GM12878 (cell line): ENCODE measurements at regions of chr4 and their contacts with region 1.

Region 1: GRCh38 chr4:87375719-87376291 is 15.2 kb downstream of the HSD17B11 start:
- DNase-seq: no peak
- ATAC-seq: peak; percentile 81
- H3K4me3 ChIP-seq: no peak overlapping the region
- H3K27ac ChIP-seq: no peak overlapping the region
- H3K4me1 ChIP-seq: no peaks in the 10 kb centered on the region
- H3K27me3 ChIP-seq: no peaks in the 10 kb centered on the region
- CTCF ChIP-seq: peak; percentile 64 to 76 (median 65)
- EP300 ChIP-seq: no peak
- POLR2A ChIP-seq: no peak
- RAD21 ChIP-seq: peak; percentile 86

Region 2: GRCh38 chr4:86934771-86935565 is 440.8 kb before region 1 on chr4 and contains the start of gene AFF1:
- CTCF ChIA-PET with region 1: no interaction called
- POLR2A ChIA-PET with region 1: no interaction called
- RAD21 ChIA-PET with region 1: no interaction called
- SMC1A ChIA-PET with region 1: no interaction called
- in situ Hi-C with region 1: no loop called
- intact Hi-C with region 1: no loop called
- DNase-seq: peak; percentile 71
- ATAC-seq: peak; percentile 72
- H3K4me3 ChIP-seq: peak within 1 kb of the TSS; percentile 91
- H3K27ac ChIP-seq: peak within 1 kb of the TSS; percentile 93
- H3K4me1 ChIP-seq: peaks cover 3% of the 10 kb centered on the region; the same call in 1 of the 2 replicates
- H3K27me3 ChIP-seq: no peaks in the 10 kb centered on the region
- CTCF ChIP-seq: peak in 2 of 3 experiments; percentile 30 to 32; a peak in 4 of 6 replicates
- EP300 ChIP-seq: no peak
- POLR2A ChIP-seq: peak; percentile 96
- RAD21 ChIP-seq: peak; percentile 17; the same call in 1 of the 2 replicates
- polyA plus RNA-seq, gene AFF1: 3.5 to 11.4 TPM

Region 3: DNA sequence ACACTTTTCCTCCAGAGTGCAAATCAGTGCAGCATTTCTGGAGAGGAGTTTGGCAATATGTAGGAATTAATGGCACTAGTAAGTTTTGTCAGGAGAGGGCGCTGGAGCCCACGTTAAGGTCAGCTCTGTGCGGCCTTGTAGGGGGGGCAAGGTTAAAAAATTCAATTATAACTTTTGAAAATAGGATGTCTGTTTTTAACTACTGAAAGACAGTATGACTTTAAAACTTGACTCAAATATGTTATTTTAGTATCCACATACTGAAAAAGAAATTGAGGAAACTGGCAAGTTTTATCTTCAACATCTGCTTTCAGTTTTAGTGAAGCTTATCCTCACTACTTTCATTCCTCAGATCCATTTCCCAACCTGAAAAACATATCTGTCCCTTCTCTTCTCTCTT is 22.2 kb before region 1 on chr4:
- CTCF ChIA-PET with region 1: interaction called, 11 read pairs
- POLR2A ChIA-PET with region 1: no interaction called
- RAD21 ChIA-PET with region 1: interaction called, 3 read pairs
- SMC1A ChIA-PET with region 1: interaction called, 7 read pairs
- in situ Hi-C with region 1: no loop called
- intact Hi-C with region 1: no loop called
- DNase-seq: peak; percentile 13
- ATAC-seq: peak; percentile 83
- H3K4me3 ChIP-seq: no peak overlapping the region
- H3K27ac ChIP-seq: no peak overlapping the region
- H3K4me1 ChIP-seq: peaks cover 9% of the 10 kb centered on the region
- H3K27me3 ChIP-seq: no peaks in the 10 kb centered on the region
- CTCF ChIP-seq: peak; percentile 51 to 74 (median 66); a peak in 5 of 6 replicates
- EP300 ChIP-seq: no peak
- POLR2A ChIP-seq: no peak
- RAD21 ChIP-seq: peak; percentile 84

Region 4: GRCh38 chr4:87363567-87363966 is 12.2 kb before region 1 on chr4:
- CTCF ChIA-PET with region 1: interaction called, 11 read pairs
- POLR2A ChIA-PET with region 1: interaction called, 4 read pairs
- RAD21 ChIA-PET with region 1: interaction called, 3 read pairs
- SMC1A ChIA-PET with region 1: interaction called, 5 read pairs
- in situ Hi-C with region 1: no loop called
- intact Hi-C with region 1: no loop called
- DNase-seq: no peak
- ATAC-seq: no peak
- H3K4me3 ChIP-seq: no peak overlapping the region
- H3K27ac ChIP-seq: no peak overlapping the region
- H3K4me1 ChIP-seq: no peaks in the 10 kb centered on the region
- H3K27me3 ChIP-seq: no peaks in the 10 kb centered on the region
- CTCF ChIP-seq: no peak
- EP300 ChIP-seq: no peak
- POLR2A ChIP-seq: no peak
- RAD21 ChIP-seq: no peak

Region 5: GRCh38 chr4:87390891-87391575 is 15.2 kb after region 1 on chr4 and contains the start of gene HSD17B11:
- CTCF ChIA-PET with region 1: interaction called, 46 read pairs
- POLR2A ChIA-PET with region 1: interaction called, 5 read pairs
- RAD21 ChIA-PET with region 1: interaction called, 10 read pairs
- SMC1A ChIA-PET with region 1: interaction called, 54 read pairs
- in situ Hi-C with region 1: no loop called
- intact Hi-C with region 1: no loop called
- DNase-seq: peak; percentile 86
- ATAC-seq: peak; percentile 98
- H3K4me3 ChIP-seq: peak within 1 kb of the TSS; percentile 83
- H3K27ac ChIP-seq: peak within 1 kb of the TSS; percentile 71
- H3K4me1 ChIP-seq: peaks cover 3% of the 10 kb centered on the region; the same call in 1 of the 2 replicates
- H3K27me3 ChIP-seq: no peaks in the 10 kb centered on the region
- CTCF ChIP-seq: peak; percentile 5 to 14 (median 8); a peak in 3 of 6 replicates
- EP300 ChIP-seq: no peak
- POLR2A ChIP-seq: peak; percentile 92
- RAD21 ChIP-seq: 0 out of 2 replicates have a peak, but pooled peaks have one; percentile 5
- polyA plus RNA-seq, gene HSD17B11: 24.4 to 29.5 TPM

Region 6: GRCh38 chr4:87422104-87423052 is 46.6 kb after region 1 on chr4 and contains the start of gene NUDT9:
- CTCF ChIA-PET with region 1: interaction called, 38 read pairs
- POLR2A ChIA-PET with region 1: no interaction called
- RAD21 ChIA-PET with region 1: interaction called, 5 read pairs
- SMC1A ChIA-PET with region 1: interaction called, 5 read pairs
- in situ Hi-C with region 1: no loop called
- intact Hi-C with region 1: loop called (anchors 2 kb)
- DNase-seq: peak; percentile 64
- ATAC-seq: peak; percentile 93
- H3K4me3 ChIP-seq: peak within 1 kb of the TSS; percentile 96
- H3K27ac ChIP-seq: peak within 1 kb of the TSS; percentile 91
- H3K4me1 ChIP-seq: no peaks in the 10 kb centered on the region
- H3K27me3 ChIP-seq: no peaks in the 10 kb centered on the region
- CTCF ChIP-seq: no peak
- EP300 ChIP-seq: peak in 1 of 2 experiments; percentile 62; a peak in 1 of 4 replicates
- POLR2A ChIP-seq: peak; percentile 86
- RAD21 ChIP-seq: no peak
- polyA plus RNA-seq, gene NUDT9: 8.4 to 15.6 TPM

Region 7: GRCh38 chr4:87458913-87459312 is 83.1 kb after region 1 on chr4:
- CTCF ChIA-PET with region 1: interaction called, 201 read pairs
- POLR2A ChIA-PET with region 1: no interaction called
- RAD21 ChIA-PET with region 1: interaction called, 80 read pairs
- SMC1A ChIA-PET with region 1: interaction called, 110 read pairs
- in situ Hi-C with region 1: loop called (anchors 5 kb)
- intact Hi-C with region 1: no loop called
- DNase-seq: no peak
- ATAC-seq: no peak
- H3K4me3 ChIP-seq: no peak overlapping the region
- H3K27ac ChIP-seq: no peak overlapping the region
- H3K4me1 ChIP-seq: no peaks in the 10 kb centered on the region
- H3K27me3 ChIP-seq: no peaks in the 10 kb centered on the region
- CTCF ChIP-seq: no peak
- EP300 ChIP-seq: no peak
- POLR2A ChIP-seq: no peak
- RAD21 ChIP-seq: no peak